ENCODE measurements at regions of chr16 and their contacts with region 1.

Region 1: GRCh38 chr16:22235839-22236745 is 30.0 kb downstream of the EEF2K start:
- DNase-seq: no peak
- ATAC-seq: no peak
- H3K4me3 ChIP-seq: no peak overlapping the region
- H3K27ac ChIP-seq: no peak overlapping the region
- H3K4me1 ChIP-seq: no peaks in the 10 kb centered on the region
- H3K27me3 ChIP-seq: no peaks in the 10 kb centered on the region
- CTCF ChIP-seq: no peak
- POLR2A ChIP-seq: no peak
- RAD21 ChIP-seq: no peak

Region 2: GRCh38 chr16:22014271-22014873 is 221.7 kb before region 1 on chr16:
- CTCF ChIA-PET with region 1: no interaction called
- POLR2A ChIA-PET with region 1: interaction called, 13 read pairs
- dilution Hi-C with region 1: no loop called
- in situ Hi-C with region 1: no loop called
- intact Hi-C with region 1: no loop called
- DNase-seq: no peak
- ATAC-seq: no peak
- H3K4me3 ChIP-seq: no peak overlapping the region
- H3K27ac ChIP-seq: no peak overlapping the region
- H3K4me1 ChIP-seq: peaks cover 7% of the 10 kb centered on the region
- H3K27me3 ChIP-seq: no peaks in the 10 kb centered on the region
- CTCF ChIP-seq: no peak
- POLR2A ChIP-seq: no peak
- RAD21 ChIP-seq: no peak

Region 3: DNA sequence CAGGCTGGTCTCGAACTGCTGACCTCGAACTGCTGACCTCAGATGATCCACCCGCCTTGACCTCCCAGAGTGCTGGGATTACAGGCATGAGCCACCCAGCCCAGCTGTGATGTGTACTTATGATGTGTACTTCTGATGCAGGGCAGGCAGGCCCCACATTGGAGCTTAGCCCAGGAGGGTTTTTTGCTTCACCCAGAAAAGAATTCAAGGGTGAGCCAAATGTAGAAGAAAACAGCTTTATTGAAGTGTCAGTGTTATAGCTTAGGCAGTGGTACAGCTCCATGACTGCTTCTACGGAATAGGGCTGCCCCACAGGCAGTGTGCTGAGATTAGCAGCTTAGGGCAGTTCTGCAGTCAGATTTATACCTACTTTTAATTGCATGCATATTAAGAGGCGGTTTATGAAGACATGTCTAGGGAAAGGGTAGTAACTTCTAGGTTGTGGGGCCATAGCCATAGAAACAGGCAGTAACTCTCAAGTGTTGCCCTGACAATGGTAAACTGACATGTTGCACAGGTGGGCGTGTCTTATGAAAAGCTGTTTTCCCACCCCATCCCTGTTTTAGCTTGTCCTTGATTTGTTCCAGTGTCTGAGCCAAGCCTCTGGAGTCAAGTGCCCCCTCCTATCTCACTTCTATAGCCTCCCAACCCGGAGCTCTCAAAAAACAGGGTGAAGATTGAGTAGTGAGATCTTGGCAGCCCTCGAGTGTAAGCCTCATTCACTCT is 36.9 kb after region 1 on chr16:
- CTCF ChIA-PET with region 1: no interaction called
- POLR2A ChIA-PET with region 1: no interaction called
- dilution Hi-C with region 1: no loop called
- in situ Hi-C with region 1: no loop called
- intact Hi-C with region 1: no loop called
- DNase-seq: peak; percentile 31
- ATAC-seq: peak; percentile 62
- H3K4me3 ChIP-seq: no peak overlapping the region
- H3K27ac ChIP-seq: no peak overlapping the region
- H3K4me1 ChIP-seq: no peaks in the 10 kb centered on the region; the same call in 1 of the 2 replicates
- H3K27me3 ChIP-seq: no peaks in the 10 kb centered on the region
- CTCF ChIP-seq: no peak
- POLR2A ChIP-seq: no peak
- RAD21 ChIP-seq: no peak